Caco-2 (cell line): ENCODE measurements at regions of chr6 and their contacts with region 1.

Region 1: GRCh38 chr6:96897383-96898240 is at the start of gene NDUFAF4:
- DNase-seq: peak; percentile 93 to 95
- H3K4me3 ChIP-seq: peak within 1 kb of the TSS; percentile 93
- H3K4me3 Mint-ChIP-seq: peak within 1 kb of the TSS; percentile 75
- H3K27ac Mint-ChIP-seq: peak within 1 kb of the TSS; percentile 67
- H3K4me1 ChIP-seq: peaks cover 6% of the 10 kb centered on the region; the same call in 1 of the 2 replicates
- H3K4me1 Mint-ChIP-seq: peaks cover 8% of the 10 kb centered on the region
- H3K27me3 ChIP-seq: no peaks in the 10 kb centered on the region
- H3K27me3 Mint-ChIP-seq: no peaks in the 10 kb centered on the region
- CTCF ChIP-seq: peak; percentile 81 to 87
- total RNA-seq, gene NDUFAF4: 44.1 and 51.8 TPM in 2 replicates

Region 2: DNA sequence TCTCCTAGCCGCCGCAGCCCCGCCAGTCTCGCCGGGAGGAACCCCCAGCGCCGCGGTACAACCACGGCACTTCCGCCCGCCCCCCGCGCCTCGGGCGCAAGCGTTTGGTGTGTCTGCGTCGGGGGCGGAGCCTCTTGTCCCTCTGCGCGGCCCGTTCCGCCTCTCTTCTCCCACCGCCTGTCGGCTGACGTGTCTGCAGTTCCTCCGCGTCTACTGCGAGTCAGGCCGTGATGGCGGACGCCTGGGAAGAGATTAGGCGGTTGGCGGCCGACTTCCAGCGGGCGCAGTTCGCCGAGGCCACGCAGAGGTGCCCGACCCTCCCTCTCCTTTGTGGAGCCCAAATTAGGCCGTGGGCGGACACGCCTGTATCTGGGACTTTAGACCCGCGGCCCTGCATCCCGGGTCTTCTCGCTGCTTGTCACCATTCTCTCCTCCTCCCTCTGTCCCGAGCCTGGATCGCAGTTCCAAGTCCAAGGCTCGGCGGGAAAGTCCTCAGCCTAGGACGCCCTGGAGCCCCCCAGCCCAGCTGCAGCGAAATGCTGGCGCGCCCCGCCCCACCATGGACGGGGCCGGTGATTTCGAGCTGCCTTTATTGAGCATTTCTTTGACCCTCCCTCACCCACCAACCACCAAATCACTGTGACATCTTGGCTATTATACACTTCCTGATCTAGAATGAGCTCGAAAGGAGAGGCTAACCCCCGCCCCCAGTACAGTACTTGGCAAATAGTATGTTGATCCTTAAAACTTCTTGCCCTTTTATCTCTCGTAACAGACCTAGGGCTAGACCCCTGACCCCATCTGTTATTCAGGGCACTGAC is 375.8 kb before region 1 on chr6 and contains the start of gene UFL1:
- CTCF ChIA-PET with region 1: no interaction called
- POLR2A ChIA-PET with region 1: no interaction called
- intact Hi-C with region 1: loop called (anchors 5 kb)
- DNase-seq: peak; percentile 93 to 94
- H3K4me3 ChIP-seq: peak within 1 kb of the TSS; percentile 85
- H3K4me3 Mint-ChIP-seq: peak within 1 kb of the TSS; percentile 93
- H3K27ac Mint-ChIP-seq: peak within 1 kb of the TSS; percentile 99
- H3K4me1 ChIP-seq: peaks cover 18% of the 10 kb centered on the region
- H3K4me1 Mint-ChIP-seq: peaks cover 6% of the 10 kb centered on the region
- H3K27me3 ChIP-seq: no peaks in the 10 kb centered on the region
- H3K27me3 Mint-ChIP-seq: no peaks in the 10 kb centered on the region
- CTCF ChIP-seq: no peak
- total RNA-seq, gene UFL1: 19.4 and 21.9 TPM in 2 replicates

Region 3: GRCh38 chr6:96837081-96837971 is 60.3 kb before region 1 on chr6 and contains the start of gene GPR63:
- CTCF ChIA-PET with region 1: no interaction called
- POLR2A ChIA-PET with region 1: no interaction called
- intact Hi-C with region 1: loop called (anchors 1 kb)
- DNase-seq: peak; percentile 55 to 57
- H3K4me3 ChIP-seq: peak within 1 kb of the TSS; percentile 38
- H3K4me3 Mint-ChIP-seq: peak within 1 kb of the TSS; percentile 91
- H3K27ac Mint-ChIP-seq: peak within 1 kb of the TSS; percentile 55
- H3K4me1 ChIP-seq: 0 out of 2 replicates have a peak, but pooled peaks cover 3% of the 10 kb centered on the region
- H3K4me1 Mint-ChIP-seq: peaks cover 6% of the 10 kb centered on the region
- H3K27me3 ChIP-seq: peaks cover 4% of the 10 kb centered on the region
- H3K27me3 Mint-ChIP-seq: peaks cover 31% of the 10 kb centered on the region
- CTCF ChIP-seq: no peak
- total RNA-seq, gene GPR63: 0.11 and 0.16 TPM in 2 replicates

Region 4: GRCh38 chr6:97053643-97054411 is 156.2 kb after region 1 on chr6:
- CTCF ChIA-PET with region 1: interaction called, 5 read pairs
- POLR2A ChIA-PET with region 1: no interaction called
- intact Hi-C with region 1: loop called (anchors 1 kb)
- DNase-seq: no peak
- H3K4me3 ChIP-seq: no peak overlapping the region
- H3K4me3 Mint-ChIP-seq: no peak overlapping the region
- H3K27ac Mint-ChIP-seq: no peak overlapping the region
- H3K4me1 ChIP-seq: no peaks in the 10 kb centered on the region
- H3K4me1 Mint-ChIP-seq: no peaks in the 10 kb centered on the region
- H3K27me3 ChIP-seq: no peaks in the 10 kb centered on the region
- H3K27me3 Mint-ChIP-seq: peaks cover 13% of the 10 kb centered on the region
- CTCF ChIP-seq: peak; percentile 40 to 48

Region 5: GRCh38 chr6:97231911-97232310 is 334.3 kb after region 1 on chr6:
- CTCF ChIA-PET with region 1: no interaction called
- POLR2A ChIA-PET with region 1: no interaction called
- intact Hi-C with region 1: no loop called
- DNase-seq: no peak
- H3K4me3 ChIP-seq: no peak overlapping the region
- H3K4me3 Mint-ChIP-seq: no peak overlapping the region
- H3K27ac Mint-ChIP-seq: no peak overlapping the region
- H3K4me1 ChIP-seq: no peaks in the 10 kb centered on the region
- H3K4me1 Mint-ChIP-seq: no peaks in the 10 kb centered on the region
- H3K27me3 ChIP-seq: no peaks in the 10 kb centered on the region
- H3K27me3 Mint-ChIP-seq: no peaks in the 10 kb centered on the region
- CTCF ChIP-seq: no peak

Region 6: GRCh38 chr6:97394160-97394748 is 496.6 kb after region 1 on chr6:
- CTCF ChIA-PET with region 1: no interaction called
- POLR2A ChIA-PET with region 1: no interaction called
- intact Hi-C with region 1: loop called (anchors 5 kb)
- DNase-seq: peak; percentile 40 to 71
- H3K4me3 ChIP-seq: no peak overlapping the region
- H3K4me3 Mint-ChIP-seq: no peak overlapping the region
- H3K27ac Mint-ChIP-seq: no peak overlapping the region
- H3K4me1 ChIP-seq: no peaks in the 10 kb centered on the region
- H3K4me1 Mint-ChIP-seq: no peaks in the 10 kb centered on the region
- H3K27me3 ChIP-seq: no peaks in the 10 kb centered on the region
- H3K27me3 Mint-ChIP-seq: peaks cover 6% of the 10 kb centered on the region
- CTCF ChIP-seq: peak; percentile 82 to 83